Naive thymus-derived CD4-positive, alpha-beta T cell (primary cell): ENCODE measurements at regions of chr14 and their contacts with region 1.

Region 1: DNA sequence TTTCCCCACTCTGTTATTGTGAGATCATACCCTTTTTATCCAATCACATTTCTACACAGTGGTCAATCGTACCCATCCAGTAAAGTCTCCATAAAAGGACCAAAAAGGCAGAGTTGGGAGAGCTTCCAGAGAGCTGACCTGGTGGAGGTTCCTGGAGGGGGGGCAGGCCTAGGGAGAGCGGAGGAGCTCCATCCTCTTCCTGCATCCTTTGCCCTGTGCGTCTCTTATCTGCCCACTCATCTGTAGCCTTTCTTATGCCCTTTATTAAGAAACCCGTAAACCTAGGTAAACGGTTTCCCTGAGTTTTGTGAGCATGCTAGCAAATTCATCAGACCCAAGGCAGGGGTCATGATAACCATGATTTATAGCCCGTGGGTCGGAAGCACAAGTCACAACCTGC is 26.2 kb downstream of the EVL start:
- DNase-seq: peak in 1 of 9 donors; percentile 14
- ATAC-seq: no peak
- H3K4me3 ChIP-seq: no peak overlapping the region
- H3K4me3 Mint-ChIP-seq: peak overlapping the region; percentile 44 to 93 (median 62)
- H3K27ac ChIP-seq: peak overlapping the region; percentile 83
- H3K27ac Mint-ChIP-seq: peak overlapping the region; percentile 53 to 98 (median 94)
- H3K4me1 ChIP-seq: peaks cover 73 to 90% of the 10 kb centered on the region in 2 donors
- H3K4me1 Mint-ChIP-seq: peaks cover 59 to 100% (median 96%) of the 10 kb centered on the region in 7 donors
- H3K27me3 ChIP-seq: no peaks in the 10 kb centered on the region
- H3K27me3 Mint-ChIP-seq: no peaks in the 10 kb centered on the region

Region 2: DNA sequence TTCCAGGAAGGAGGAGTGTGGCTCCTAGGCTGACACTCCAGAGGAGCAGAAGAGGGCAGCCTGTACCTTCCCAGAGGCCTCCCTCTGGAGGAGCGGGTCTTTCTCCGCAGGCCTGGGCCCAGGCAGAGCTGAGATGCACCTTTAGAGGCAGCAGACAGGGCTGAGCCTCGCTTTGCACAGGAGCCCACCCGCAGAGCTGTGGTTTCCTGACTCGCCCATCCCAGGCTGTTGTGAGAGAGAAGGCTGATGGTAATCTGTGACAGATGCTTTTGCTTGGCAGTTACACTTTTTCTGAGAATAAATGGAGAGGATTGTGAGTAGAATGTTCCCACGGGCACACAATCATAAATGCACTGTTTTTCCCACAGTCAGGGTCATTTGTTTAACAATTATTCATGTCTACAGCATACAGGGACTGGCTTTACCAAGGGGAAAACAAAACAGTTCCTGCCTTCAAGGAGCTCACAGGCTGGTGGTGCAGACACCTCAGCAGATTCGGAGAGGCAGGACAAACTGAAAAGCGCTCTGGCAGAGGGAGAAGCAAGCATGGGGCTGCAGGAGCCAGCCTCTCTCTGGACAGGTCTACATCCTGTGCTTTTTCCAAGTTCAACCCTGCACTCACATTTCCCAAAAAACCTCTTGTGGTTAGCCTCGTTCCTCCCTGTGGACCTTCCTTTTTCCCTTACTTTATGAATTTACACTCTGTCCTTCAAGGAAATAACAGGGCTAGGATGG is 12.2 kb before region 1 on chr14:
- CTCF ChIA-PET with region 1: interaction called, 758 read pairs
- POLR2A ChIA-PET with region 1: interaction called, 2,344 read pairs
- intact Hi-C with region 1: loop called (anchors 1 kb)
- DNase-seq: peak; percentile 53 to 93 (median 90)
- ATAC-seq: peak; percentile 83
- H3K4me3 ChIP-seq: peak overlapping the region; percentile 39
- H3K4me3 Mint-ChIP-seq: peak overlapping the region; percentile 78 to 98 (median 87)
- H3K27ac ChIP-seq: peak overlapping the region; percentile 98
- H3K27ac Mint-ChIP-seq: peak overlapping the region; percentile 89 to 100 (median 98)
- H3K4me1 ChIP-seq: peaks cover 88 to 100% of the 10 kb centered on the region in 2 donors
- H3K4me1 Mint-ChIP-seq: peaks cover 83 to 99% (median 96%) of the 10 kb centered on the region in 7 donors
- H3K27me3 ChIP-seq: no peaks in the 10 kb centered on the region
- H3K27me3 Mint-ChIP-seq: no peaks in the 10 kb centered on the region

Region 3: DNA sequence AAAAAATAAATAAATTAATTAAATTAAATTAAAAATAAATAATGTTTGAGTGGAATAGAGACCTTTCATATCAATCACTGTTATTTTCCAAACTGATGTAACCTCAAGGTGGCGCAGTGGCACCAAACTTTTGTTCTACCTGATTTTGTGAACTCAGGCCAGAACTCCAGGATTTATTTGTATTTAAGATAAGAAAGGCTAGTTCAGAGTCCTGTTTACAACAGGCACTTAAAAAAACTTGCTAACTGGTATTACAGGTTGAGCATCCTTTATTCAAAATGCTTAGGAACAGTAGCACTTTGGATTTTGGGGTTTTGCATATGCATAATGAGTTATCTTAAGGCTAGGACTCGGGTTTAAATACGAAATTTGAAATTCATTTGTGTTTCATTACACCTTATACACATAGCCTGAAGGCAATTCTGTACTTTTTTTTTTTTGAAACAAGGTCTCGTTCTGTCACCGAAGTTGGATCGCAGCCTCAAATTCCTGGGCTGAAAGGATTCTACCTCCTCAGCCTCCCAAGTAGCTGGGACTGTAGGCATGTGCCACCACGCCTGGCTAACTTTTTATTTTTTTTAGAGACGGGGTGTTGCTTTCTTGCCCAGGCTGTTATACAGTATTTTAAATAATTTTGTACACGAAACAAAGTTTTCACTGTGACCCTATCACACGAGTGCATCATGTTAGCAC is 180.0 kb after region 1 on chr14:
- CTCF ChIA-PET with region 1: no interaction called
- POLR2A ChIA-PET with region 1: no interaction called
- intact Hi-C with region 1: no loop called
- DNase-seq: peak in 2 of 9 donors; percentile 22
- ATAC-seq: peak; percentile 32
- H3K4me3 ChIP-seq: no peak overlapping the region
- H3K4me3 Mint-ChIP-seq: no peak overlapping the region
- H3K27ac ChIP-seq: no peak overlapping the region
- H3K27ac Mint-ChIP-seq: peak overlapping the region in 1 of 9 donors; percentile 59
- H3K4me1 ChIP-seq: peaks cover 21 to 34% of the 10 kb centered on the region in 2 donors
- H3K4me1 Mint-ChIP-seq: peaks cover 28 to 81% (median 70%) of the 10 kb centered on the region in 7 donors
- H3K27me3 ChIP-seq: no peaks in the 10 kb centered on the region
- H3K27me3 Mint-ChIP-seq: no peaks in the 10 kb centered on the region